Transverse colon (tissue), 4 donors: ENCODE measurements at regions of chr3 and their contacts with region 1.

Region 1: DNA sequence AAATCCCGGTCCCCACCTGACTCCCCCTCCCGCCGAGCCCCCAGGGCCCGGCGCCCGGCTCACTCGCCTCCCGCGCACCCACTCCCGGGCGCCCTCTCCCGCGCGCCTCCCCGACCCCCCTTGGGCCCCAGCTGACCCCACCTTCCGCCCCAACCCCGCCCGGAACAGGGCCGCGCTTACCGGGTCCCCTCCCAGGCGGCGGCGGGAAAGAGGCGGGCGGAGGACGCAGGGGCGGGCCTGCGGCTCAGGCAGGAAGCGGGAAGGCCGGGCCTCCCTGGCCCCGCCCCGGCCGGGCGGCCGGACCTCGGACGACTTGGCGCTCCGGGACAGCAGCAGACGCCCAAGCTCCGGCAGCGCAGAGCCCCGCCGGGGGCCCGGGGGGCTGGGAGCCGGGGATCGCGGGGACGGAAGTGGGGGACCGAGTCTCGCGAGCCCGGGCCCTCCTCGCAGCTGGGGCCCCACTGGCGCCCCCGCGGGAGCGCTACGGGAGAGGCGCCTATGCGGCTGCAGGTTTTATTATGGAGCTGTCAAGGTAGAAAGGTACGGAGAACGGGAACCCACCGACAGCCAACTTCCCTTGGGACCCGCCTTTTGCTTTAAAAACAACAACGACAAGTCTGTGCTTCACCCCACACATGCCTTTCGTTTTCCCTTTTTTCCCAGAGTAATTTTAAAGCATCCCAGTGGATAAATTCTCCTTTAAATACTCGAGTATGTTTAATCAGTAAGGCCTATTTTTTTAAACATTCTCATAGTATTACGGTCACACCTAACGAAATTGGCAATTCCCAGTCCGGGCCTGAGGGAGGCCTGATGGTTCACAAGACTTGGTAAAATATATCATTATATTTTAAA is at the start of gene SLC41A3:
- DNase-seq: peak; percentile 93
- H3K4me3 ChIP-seq: peak within 1 kb of the TSS; percentile 65 to 94 (median 76)
- H3K27ac ChIP-seq: peak within 1 kb of the TSS; percentile 89 to 94 (median 91)
- H3K4me1 ChIP-seq: peaks cover 5 to 14% (median 7%) of the 10 kb centered on the region in 4 donors
- H3K27me3 ChIP-seq: no peaks in the 10 kb centered on the region
- CTCF ChIP-seq: peak in 4 of 5 experiments; percentile 37 to 59 (median 50)
- EP300 ChIP-seq: no peak
- POLR2A ChIP-seq: peak; percentile 46
- total RNA-seq, gene SLC41A3: 22.7 to 41.5 (median 29.1) TPM

Region 2: DNA sequence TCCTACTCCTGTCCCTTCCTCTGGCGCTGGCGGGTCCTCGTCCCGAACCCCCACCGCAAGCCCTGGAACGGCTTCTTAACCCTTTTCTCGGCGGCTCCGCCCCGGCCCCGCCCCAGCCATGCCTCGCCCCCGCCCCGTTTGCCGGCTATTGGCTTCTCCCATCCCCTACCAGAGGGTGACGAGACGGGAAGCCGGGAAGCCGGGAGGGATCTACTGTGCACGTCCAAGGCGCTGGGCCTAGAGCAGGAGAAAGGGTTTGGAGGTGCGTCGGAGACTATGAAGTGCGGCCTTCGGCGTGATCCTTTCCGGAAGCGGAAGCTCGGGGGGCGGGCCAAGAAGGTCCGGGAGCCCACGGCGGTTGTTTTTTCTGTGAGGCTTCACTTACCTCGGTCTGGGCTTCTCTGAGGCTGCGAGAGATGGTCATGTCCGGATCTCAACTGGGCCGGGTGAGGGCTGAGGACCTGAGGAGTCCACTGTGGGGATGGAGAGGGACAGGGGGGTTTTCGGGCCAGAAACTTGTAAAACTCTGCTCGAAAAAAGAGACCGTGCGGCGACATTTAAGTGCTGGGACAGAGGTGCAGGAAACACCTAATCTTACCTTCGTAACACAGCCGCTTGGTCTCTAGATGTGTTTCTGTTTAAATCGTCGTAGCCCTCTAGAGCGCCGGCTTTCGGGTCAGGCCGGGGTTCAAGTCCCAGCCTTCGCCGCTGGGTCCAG is 93.7 kb before region 1 on chr3:
- in situ Hi-C with region 1: no loop called
- intact Hi-C with region 1: loop called (anchors 10 kb)
- DNase-seq: peak; percentile 84
- H3K4me3 ChIP-seq: peak overlapping the region; percentile 53 to 73 (median 62)
- H3K27ac ChIP-seq: peak overlapping the region; percentile 78 to 88 (median 83)
- H3K4me1 ChIP-seq: peaks cover 0 to 12% (median 6%) of the 10 kb centered on the region in 4 donors
- H3K27me3 ChIP-seq: no peaks in the 10 kb centered on the region
- CTCF ChIP-seq: no peak
- EP300 ChIP-seq: no peak
- POLR2A ChIP-seq: peak; percentile 68